ENCODE measurements at regions of chr11 and their contacts with region 1.

Region 1: DNA sequence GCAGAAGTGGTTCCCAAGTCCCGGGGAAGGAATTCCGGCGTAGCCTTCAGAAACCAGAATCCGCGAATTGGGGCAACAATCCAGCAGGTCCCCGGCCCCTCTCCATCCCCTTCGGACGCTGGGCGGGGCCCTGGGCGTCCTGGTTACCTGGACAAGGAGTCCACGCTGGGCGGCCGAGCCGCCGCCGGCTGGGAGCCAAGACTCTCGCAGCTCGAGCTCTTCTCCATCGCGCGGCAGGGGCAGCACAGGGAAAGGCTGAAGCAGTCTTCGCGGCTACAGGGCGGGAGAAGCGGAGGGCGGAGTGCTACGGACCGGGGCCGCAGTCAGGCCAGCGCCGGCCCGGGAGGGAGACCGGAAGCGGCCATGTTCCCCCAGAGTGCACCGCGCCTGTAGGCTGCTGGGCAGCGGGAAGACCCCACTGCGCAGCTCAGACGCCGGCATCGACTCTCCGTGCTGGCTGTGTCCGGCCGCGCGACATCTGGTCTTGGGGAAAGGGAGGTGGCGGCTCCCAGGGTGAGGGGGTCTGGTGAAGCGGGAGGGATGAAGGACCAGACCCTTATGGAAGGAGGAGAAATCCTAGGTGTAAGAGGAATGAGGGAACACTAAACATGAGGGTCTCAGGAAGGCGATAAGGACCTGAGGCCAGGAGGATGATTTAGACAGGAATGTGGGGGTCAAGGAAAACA is at the start of gene MTMR2:
- DNase-seq: peak; percentile 70 to 91 (median 80)
- H3K4me3 ChIP-seq: peak within 1 kb of the TSS; percentile 55 to 99 (median 86)
- H3K27ac ChIP-seq: peak within 1 kb of the TSS; percentile 87 to 99 (median 97)
- H3K27me3 ChIP-seq: no peaks in the 10 kb centered on the region
- CTCF ChIP-seq: peak in 21 of 56 donors; percentile 5 to 51 (median 25)
- total RNA-seq, gene MTMR2: 30.2 to 76.1 (median 44.7) TPM

Region 2: GRCh38 chr11:95790123-95790932 is 133.5 kb before region 1 on chr11 and contains the start of gene CEP57:
- intact Hi-C with region 1: loop called in 1 of 2 experiments (anchors 2 kb)
- DNase-seq: peak; percentile 76 to 96 (median 94)
- H3K4me3 ChIP-seq: peak within 1 kb of the TSS; percentile 66 to 100 (median 94)
- H3K27ac ChIP-seq: peak within 1 kb of the TSS; percentile 67 to 99 (median 97)
- H3K27me3 ChIP-seq: no peaks in the 10 kb centered on the region
- CTCF ChIP-seq: peak in 1 of 56 donors; percentile 11
- total RNA-seq, gene CEP57: 25.0 to 49.2 (median 36.1) TPM

Region 3: DNA sequence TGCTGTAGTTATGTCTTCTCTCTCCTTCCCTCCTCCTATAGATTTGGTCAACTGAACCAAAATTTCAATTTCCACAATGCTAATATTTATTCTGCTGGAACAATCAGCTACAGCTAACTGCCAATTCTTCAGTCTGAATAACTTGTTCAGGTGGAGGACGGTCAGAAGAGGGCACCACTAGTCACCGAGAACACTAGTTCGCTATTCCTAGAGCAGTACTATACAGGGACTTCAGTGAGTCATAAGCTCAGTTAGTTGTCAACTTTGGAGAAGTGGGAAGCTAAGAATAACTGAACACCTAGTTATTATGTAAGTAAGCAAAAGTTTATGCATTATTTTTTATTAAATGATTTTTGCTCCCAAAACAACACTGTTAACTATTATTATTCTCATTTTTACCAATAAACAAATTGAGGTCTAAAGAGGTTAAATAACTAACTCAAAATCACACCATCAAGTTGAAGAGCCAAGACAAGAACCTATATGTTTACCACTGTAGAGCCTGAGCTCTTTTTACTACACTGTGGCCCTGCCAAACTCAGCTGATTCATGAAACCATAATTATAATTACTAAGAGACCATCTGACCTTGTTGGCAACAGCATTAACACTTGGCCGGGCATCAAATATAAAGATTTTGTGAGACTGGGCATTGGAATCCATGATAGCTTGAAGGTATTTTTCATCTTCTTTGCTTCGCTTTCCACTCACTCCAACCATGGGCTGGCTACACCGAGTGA is 74.6 kb before region 1 on chr11:
- intact Hi-C with region 1: loop called (anchors 5 kb)
- DNase-seq: peak in 6 of 10 donors; percentile 13 to 72 (median 46)
- H3K4me3 ChIP-seq: no peak overlapping the region
- H3K27ac ChIP-seq: peak overlapping the region in 39 of 59 donors; percentile 1 to 73 (median 43)
- H3K27me3 ChIP-seq: no peaks in the 10 kb centered on the region
- CTCF ChIP-seq: peak in 54 of 56 donors; percentile 43 to 84 (median 60)

Region 4: GRCh38 chr11:96012086-96012824 is 88.4 kb after region 1 on chr11:
- intact Hi-C with region 1: loop called in 1 of 2 experiments (anchors 5 kb)
- DNase-seq: peak in 9 of 10 donors; percentile 39 to 76 (median 55)
- H3K4me3 ChIP-seq: peak overlapping the region in 45 of 59 donors; percentile 4 to 48 (median 29)
- H3K27ac ChIP-seq: peak overlapping the region in 57 of 59 donors; percentile 4 to 86 (median 63)
- H3K27me3 ChIP-seq: no peaks in the 10 kb centered on the region
- CTCF ChIP-seq: peak in 55 of 56 donors; percentile 40 to 85 (median 66)

Region 5: DNA sequence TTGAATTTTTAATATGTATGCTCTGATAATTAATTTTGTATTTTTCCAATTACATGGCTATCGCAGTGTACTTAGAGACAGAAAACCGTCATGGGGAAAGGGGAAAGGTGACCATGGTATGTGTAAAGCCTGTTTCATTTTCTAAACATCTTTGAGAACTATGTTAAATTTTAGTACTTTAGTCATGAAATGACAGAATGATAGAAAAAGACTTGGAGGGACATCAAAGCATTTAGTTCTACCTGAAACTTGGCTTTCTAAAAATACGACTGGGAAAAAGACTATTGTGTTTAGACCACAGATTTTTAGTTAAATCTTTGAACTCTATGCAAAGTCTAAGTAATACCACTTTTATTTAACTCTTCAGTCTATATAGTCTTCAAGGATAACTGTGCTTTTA is 365.0 kb after region 1 on chr11:
- intact Hi-C with region 1: no loop called
- DNase-seq: no peak
- H3K4me3 ChIP-seq: no peak overlapping the region
- H3K27ac ChIP-seq: no peak overlapping the region
- H3K27me3 ChIP-seq: no peaks in the 10 kb centered on the region
- CTCF ChIP-seq: no peak

Measured in dorsolateral prefrontal cortex (tissue), 120 donors.